ENCODE measurements at regions of chr2 and their contacts with region 1.

Region 1: GRCh38 chr2:43226558-43226954 is at the start of gene ZFP36L2:
- DNase-seq: peak; percentile 99
- ATAC-seq: peak; percentile 82
- total RNA-seq, gene ZFP36L2: 51.1 TPM

Region 2: GRCh38 chr2:42859006-42859552 is 367.5 kb before region 1 on chr2:
- intact Hi-C with region 1: loop called (anchors 2 kb)
- DNase-seq: no peak
- ATAC-seq: no peak

Region 3: DNA sequence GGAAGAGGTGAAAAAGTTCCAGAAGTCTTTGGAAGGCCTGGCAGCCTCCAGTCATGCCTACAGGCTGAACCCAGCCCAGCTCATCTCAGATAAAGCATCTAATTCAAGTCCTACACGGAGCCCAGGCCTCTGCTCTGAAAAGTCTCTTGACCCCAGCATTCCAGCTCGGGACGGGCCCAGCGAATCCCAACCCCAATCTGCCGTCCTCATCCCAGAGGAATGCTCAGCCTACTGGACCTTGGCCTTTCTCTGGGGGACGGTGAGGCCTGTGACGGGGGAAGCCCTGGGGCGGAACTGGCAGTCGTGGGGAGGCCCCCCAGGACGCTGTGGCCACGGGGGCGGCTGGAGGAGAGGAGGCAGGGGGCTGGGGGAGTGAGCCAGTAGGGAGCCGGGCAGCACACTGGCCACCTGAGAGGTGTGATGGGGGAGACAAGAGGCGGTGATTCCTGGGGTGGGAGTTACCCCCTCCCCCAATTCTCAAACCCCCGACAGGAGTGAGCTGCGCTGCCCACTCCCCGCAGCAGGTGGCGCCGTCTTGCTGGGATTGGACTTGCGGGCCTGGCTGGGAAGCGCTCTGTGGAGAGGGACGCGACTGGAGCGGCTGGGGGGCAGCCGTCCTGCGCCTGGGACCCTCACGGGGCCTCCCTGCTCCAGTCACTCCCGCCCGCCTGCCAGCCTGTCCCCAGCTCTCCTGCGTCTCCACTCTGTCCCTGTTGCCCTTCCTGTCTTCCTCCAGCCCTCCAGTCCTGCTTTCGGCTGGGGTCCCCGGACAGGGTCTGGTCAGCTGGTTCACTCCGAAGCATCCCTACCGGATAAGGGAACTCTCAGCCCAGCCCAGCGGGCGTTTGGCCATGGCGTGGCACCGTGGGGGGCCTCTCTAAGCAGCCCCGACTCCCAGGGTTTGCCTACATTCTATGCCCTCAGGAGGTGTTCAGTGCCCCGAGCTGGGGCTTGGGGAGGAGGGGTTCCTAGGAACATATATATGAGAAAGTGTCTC is 251.5 kb before region 1 on chr2:
- intact Hi-C with region 1: loop called (anchors 2 kb)
- DNase-seq: peak; percentile 87
- ATAC-seq: peak; percentile 88

Region 4: GRCh38 chr2:43131024-43131889 is 95.3 kb before region 1 on chr2:
- intact Hi-C with region 1: loop called (anchors 2 kb)
- DNase-seq: peak; percentile 90
- ATAC-seq: peak; percentile 58

Region 5: GRCh38 chr2:43333656-43334144 is 107.1 kb after region 1 on chr2:
- intact Hi-C with region 1: loop called (anchors 2 kb)
- DNase-seq: no peak
- ATAC-seq: peak; percentile 64

Region 6: DNA sequence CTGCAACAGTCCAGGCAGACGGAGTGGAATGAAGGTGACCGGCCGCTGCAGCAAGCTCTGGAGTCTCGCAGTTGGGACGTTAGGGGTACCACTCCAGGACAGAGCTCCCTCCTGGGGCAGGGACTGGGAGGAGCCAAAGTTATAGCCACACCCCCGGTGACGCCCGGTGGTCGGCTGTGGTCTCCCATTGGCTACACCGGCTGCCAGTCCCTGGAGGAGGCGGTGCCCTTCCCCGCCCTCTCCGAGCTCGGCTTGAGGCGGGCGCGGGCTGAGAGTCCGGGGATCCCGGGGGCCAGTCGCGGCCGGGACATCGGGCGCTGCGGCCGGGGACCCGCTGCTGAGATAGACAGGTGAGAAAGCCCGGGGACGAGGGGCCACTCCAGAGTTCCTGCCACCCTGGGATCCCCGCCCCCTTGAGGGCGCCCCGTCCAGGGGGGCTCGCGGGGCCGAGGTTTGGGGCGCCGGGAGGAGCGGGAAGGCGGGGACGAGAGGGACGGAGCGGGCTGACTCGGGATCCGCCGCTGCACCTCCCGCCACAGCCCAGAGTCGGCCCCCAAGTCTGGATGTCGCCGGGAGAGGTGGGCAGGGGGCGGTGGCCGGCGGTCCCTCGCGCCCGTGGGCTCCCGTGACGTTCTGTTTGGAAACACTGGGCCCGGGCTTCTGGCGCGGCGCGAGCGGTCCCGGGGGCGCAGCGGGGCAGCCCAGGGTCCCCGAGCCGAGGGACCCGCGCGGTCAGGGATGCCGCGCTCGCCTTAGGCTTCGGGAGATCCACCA is 410.7 kb after region 1 on chr2 and contains the start of gene PLEKHH2:
- intact Hi-C with region 1: no loop called
- DNase-seq: peak; percentile 89
- ATAC-seq: peak; percentile 99
- total RNA-seq, gene PLEKHH2: 1.1 TPM